ENCODE measurements at regions of chr1 and their contacts with region 1.

Region 1: DNA sequence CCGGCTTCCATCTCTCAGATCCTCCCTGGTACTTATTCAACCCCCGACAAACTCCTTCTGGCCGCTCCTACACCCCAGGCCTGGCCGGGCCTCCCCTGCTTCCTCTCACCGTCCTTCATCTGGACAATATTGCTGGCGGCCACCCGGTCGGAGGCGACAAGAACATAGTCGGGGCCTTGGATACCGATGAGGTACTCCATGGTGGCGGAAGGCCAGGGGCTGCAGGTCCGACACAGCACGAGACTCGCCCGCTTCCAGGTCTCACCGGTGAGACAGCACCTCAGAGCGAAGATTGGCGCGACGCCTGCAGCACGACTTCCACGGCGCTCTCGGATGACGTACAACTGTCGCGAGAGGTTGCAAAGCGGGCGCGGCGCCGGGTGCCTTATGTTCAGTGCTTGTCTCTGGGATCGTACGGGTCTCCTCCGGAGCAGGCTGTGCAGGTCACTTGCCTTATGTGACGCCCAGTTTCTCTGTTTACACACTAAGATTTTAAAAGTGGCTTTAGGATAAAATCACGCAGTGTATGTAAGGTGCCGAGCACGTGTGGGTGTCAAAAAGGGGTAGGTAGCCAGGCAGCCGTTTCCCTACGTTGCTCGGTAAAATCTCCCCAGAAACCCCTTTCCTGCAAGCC is at the start of gene PSMB2:
- DNase-seq: peak; percentile 94
- ATAC-seq: peak; percentile 85
- H3K4me3 ChIP-seq: peak within 1 kb of the TSS; percentile 68 to 90
- H3K27ac ChIP-seq: peak within 1 kb of the TSS; percentile 89
- H3K4me1 ChIP-seq: peaks cover 3 to 31% of the 10 kb centered on the region in 2 experiments; a peak in 3 of 4 replicates
- H3K27me3 ChIP-seq: peaks cover 5% of the 10 kb centered on the region; the same call in 1 of the 2 replicates
- CTCF ChIP-seq: no peak
- POLR2A ChIP-seq: peak; percentile 96
- RAD21 ChIP-seq: no peak
- total RNA-seq, gene PSMB2: 122 TPM

Region 2: DNA sequence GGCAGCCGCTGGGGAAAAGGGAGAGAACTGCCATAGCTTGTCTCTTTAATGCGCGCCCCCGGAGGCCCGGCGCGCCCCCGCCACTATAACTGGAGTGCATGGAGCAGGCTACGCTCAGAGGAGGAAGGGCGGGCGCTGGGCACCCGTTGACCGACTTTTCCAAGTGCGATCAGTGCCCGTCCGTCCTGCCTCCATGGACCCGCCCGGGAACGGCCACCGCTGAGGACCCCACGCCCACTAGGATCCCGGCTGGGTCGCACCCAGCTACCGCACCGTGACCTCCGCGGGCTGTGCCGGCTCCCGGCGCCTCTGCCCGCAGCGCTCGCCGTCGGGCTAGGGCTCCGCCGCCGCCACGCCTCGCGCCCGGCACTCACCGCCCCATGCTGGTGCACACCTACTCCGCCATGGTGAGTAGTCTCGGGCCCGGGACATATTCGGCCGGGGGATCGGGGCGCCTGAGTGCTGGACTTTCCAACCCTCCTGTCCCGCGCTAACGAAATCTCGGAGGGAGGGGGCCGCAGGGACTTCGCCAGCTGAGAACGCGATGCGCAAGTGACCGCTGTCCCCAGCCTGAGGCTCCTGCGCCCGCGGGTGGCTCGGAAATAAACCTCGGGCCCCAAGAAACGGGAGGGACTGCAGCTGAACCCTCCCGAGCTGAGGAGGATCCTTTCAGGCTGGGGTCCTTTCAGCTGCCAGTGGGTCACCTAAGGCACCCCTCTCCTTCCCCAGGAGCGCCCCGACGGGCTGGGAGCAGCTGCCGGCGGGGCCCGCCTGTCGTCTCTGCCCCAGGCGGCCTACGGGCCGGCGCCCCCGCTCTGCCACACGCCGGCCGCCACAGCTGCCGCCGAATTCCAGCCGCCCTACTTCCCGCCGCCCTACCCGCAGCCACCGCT is 67.9 kb before region 1 on chr1 and contains the start of gene TFAP2E:
- CTCF ChIA-PET with region 1: interaction called, 3 read pairs
- POLR2A ChIA-PET with region 1: interaction called, 3 read pairs
- RAD21 ChIA-PET with region 1: interaction called in 1 of 2 experiments, 3 read pairs
- intact Hi-C with region 1: loop called (anchors 5 kb)
- DNase-seq: peak; percentile 38
- ATAC-seq: peak; percentile 76
- H3K4me3 ChIP-seq: peak within 1 kb of the TSS; percentile 70 to 89
- H3K27ac ChIP-seq: peak within 1 kb of the TSS; percentile 67; the same call in 1 of the 2 replicates
- H3K4me1 ChIP-seq: peaks cover 20 to 39% of the 10 kb centered on the region in 2 experiments; a peak in 3 of 4 replicates
- H3K27me3 ChIP-seq: no peaks in the 10 kb centered on the region
- CTCF ChIP-seq: no peak
- POLR2A ChIP-seq: no peak
- RAD21 ChIP-seq: no peak
- total RNA-seq, gene TFAP2E: 6.1 TPM

Region 3: GRCh38 chr1:35715568-35716002 is 74.2 kb after region 1 on chr1:
- CTCF ChIA-PET with region 1: interaction called, 12 read pairs
- POLR2A ChIA-PET with region 1: interaction called, 4 read pairs
- RAD21 ChIA-PET with region 1: no interaction called
- intact Hi-C with region 1: loop called (anchors 1 kb)
- DNase-seq: peak; percentile 72
- ATAC-seq: peak; percentile 69
- H3K4me3 ChIP-seq: no peak overlapping the region
- H3K27ac ChIP-seq: no peak overlapping the region; the same call in 1 of the 2 replicates
- H3K4me1 ChIP-seq: peaks cover 11 to 25% of the 10 kb centered on the region in 2 experiments
- H3K27me3 ChIP-seq: no peaks in the 10 kb centered on the region
- CTCF ChIP-seq: peak; percentile 71 to 93 (median 89)
- POLR2A ChIP-seq: no peak
- RAD21 ChIP-seq: peak; percentile 84

Region 4: GRCh38 chr1:36034692-36035091 is 393.3 kb after region 1 on chr1:
- CTCF ChIA-PET with region 1: no interaction called
- POLR2A ChIA-PET with region 1: no interaction called
- RAD21 ChIA-PET with region 1: no interaction called
- intact Hi-C with region 1: no loop called
- DNase-seq: no peak
- ATAC-seq: no peak; the same call in 1 of the 2 replicates
- H3K4me3 ChIP-seq: no peak overlapping the region
- H3K27ac ChIP-seq: no peak overlapping the region; the same call in 1 of the 2 replicates
- H3K4me1 ChIP-seq: peaks cover 0 to 11% of the 10 kb centered on the region in 2 experiments; a peak in 2 of 4 replicates
- H3K27me3 ChIP-seq: no peaks in the 10 kb centered on the region
- CTCF ChIP-seq: no peak
- POLR2A ChIP-seq: no peak
- RAD21 ChIP-seq: no peak

Measured in HCT116 (cell line).